ENCODE measurements at regions of chr9 and their contacts with region 1.

Region 1: GRCh38 chr9:78369639-78370219 is 72.8 kb downstream of the PSAT1 start:
- DNase-seq: peak; percentile 53 to 81
- ATAC-seq: peak; percentile 81

Region 2: GRCh38 chr9:78261403-78262001 is 108.2 kb before region 1 on chr9:
- intact Hi-C with region 1: loop called in 1 of 2 experiments (anchors 5 kb)
- DNase-seq: no peak
- ATAC-seq: no peak